GM13977 (cell line): ENCODE measurements at regions of chrX and their contacts with region 1.

Region 1: GRCh38 chrX:33434256-33435092 is 223.1 kb upstream of the DMD start:
- DNase-seq: peak; percentile 25
- CTCF ChIP-seq: peak; percentile 83

Region 2: DNA sequence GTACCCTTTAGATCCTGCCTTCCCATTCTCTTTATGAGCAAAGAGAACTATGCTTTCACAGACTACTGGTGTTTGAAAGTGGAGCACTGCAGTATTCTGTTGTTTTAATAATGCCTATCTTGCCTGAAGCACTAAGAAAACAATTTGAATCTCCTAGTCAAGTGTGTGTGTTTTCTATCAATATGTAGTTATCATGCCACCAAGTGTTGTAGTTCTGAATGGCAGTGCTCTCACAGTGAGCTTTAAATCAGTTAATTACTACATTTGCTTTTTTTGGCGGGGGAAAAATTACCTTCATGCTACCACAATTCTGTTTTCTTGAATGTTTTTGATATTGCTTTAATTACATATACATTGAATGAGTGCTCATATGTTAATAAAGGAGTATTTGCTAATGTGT is 841.2 kb after region 1 on chrX:
- in situ Hi-C with region 1: loop called (anchors 25 kb)
- DNase-seq: no peak
- CTCF ChIP-seq: no peak